ENCODE measurements at regions of chr14 and their contacts with region 1.

Region 1: DNA sequence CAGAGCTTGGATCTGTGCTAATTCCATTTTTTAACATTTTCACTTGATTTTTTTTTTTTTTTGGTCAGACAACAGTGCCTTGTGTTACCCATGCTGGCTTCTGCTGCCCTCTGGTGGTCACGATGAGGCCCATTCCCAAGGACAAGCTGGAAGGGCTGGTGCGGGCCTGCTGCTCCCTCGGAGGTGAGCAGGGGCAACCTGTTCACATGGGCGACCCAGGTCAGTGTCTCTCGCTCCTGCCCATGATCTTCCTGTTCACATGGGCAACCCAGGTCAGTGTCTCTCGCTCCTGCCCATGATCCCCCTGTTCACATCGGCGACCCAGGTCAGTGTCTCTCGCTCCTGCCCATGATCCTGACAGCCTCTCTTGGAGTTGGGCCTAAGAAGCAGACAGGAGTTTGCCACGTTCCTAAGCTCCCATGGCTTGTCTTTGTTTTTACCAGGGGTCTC is 59.4 kb downstream of the DGLUCY start:
- DNase-seq: peak; percentile 78

Region 2: DNA sequence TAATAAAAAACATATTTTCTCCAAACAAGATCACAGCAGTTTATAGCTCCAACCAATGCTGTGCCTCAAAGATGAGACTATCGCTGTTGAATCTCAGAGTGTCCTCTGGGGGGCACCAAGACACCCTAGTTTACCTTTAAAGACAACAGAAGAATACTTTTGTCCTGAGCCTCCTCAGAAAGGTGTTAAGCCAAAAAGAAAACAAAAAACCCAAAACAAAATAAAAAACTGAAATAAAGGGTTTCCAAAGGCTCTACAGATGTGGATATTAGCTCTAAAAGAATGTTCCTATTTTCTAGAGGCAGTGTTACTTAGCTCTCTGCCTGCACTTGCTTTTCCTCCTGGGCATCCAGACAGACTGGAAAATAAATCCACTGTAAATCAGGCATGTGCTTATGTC is 270.1 kb before region 1 on chr14:
- in situ Hi-C with region 1: loop called (anchors 25 kb)
- DNase-seq: peak; percentile 67

Measured in KBM-7 (cell line).